ENCODE measurements at regions of chr5 and their contacts with region 1.

Region 1: GRCh38 chr5:7745882-7746610 is 104.9 kb downstream of the CFAP90 start:
- DNase-seq: peak; percentile 80 to 85
- ATAC-seq: no peak
- H3K4me3 ChIP-seq: no peak overlapping the region
- H3K27ac ChIP-seq: no peak overlapping the region
- H3K4me1 ChIP-seq: no peaks in the 10 kb centered on the region
- H3K27me3 ChIP-seq: no peaks in the 10 kb centered on the region

Region 2: DNA sequence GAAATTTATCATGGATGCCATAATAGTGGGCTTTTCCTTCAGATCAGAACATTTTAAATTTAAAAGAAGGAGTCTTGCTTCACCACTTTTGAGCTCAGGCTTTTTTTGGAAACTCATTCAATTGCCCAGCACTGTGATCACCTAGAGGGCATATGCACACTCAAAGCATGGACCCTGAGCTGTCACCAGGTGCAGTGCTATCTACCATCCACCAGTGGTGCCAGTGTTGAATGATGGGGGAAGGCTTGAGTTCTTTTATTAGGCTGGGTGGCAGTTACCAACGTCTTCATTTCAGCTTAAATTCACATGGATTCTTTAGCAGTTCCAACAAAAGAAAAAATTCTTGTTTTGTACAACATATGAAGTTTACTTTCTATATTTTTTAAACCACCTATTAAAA is 59.3 kb before region 1 on chr5:
- intact Hi-C with region 1: loop called in 1 of 2 experiments (anchors 2 kb)
- DNase-seq: no peak
- ATAC-seq: no peak
- H3K4me3 ChIP-seq: no peak overlapping the region
- H3K27ac ChIP-seq: no peak overlapping the region
- H3K4me1 ChIP-seq: no peaks in the 10 kb centered on the region
- H3K27me3 ChIP-seq: no peaks in the 10 kb centered on the region

Measured in aorta (tissue), 5 donors.